PC-9 (cell line): ENCODE measurements at regions of chr1 and their contacts with region 1.

Region 1: DNA sequence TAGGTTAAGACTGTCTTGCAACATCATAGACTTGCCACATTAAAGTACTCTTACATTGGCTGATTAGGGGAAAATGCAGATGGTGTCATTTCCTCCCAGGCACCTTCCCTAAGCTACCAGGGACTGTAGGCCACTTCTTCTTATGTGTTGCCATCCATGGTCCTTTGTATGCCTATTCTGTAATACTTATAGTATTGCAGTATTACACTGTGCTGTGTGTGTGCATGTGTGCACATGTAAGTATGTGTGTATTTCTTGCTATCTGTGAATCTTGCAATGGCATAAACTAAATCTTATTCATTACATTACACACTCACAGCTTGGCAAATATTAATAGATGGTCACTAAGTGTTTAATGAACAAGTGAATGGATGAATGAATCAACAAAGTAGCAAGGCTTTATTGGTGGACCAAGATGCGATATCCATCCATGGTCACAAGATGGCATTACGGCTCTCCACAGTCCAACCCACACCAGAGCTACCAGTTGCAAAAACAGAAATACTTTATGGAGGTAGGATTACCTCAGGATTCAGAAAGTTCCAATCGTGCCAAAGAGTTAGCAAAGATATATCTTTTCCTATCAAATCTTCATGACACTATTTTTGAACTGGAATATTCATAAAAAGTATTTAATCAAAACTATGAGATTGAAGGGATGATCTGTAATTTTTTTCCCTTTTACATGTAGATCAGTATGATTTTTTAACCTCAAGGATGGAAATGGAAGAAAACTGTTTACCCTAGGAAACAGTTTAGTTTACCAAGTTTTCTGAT is 160.2 kb downstream of the DENND1B start:
- DNase-seq: peak in 1 of 2 experiments; percentile 17
- H3K4me3 ChIP-seq: no peak overlapping the region
- H3K27ac ChIP-seq: no peak overlapping the region
- H3K4me1 ChIP-seq: no peaks in the 10 kb centered on the region
- H3K27me3 ChIP-seq: no peaks in the 10 kb centered on the region
- CTCF ChIP-seq: peak; percentile 67

Region 2: DNA sequence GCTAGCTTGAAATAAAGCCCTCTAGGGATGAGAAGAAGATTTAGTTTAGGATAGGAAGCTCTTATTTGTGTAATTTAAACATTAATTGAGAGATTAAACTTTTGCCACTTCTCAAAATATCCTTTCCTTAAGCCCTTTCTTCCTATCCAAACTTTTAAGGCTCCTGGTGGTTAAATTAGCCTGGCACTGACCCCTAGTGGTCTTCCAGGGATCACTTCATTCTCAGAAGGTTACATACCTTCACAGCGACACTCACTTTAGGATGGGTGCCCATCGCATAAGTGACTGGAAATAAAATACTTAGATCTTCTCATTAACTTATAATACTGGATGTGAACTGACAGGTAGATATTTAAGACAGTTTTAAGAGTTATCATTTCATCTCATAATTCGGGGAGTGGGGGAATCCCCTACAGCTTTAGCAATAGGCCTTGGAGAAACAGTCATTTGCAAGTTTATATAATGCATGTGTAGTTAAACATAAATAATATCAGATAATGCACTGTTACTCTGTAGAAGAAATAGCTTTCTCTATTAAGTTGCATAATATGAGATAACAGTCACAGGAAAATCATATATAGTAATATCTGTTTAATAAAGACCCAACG is 309.5 kb after region 1 on chr1:
- CTCF ChIA-PET with region 1: interaction called, 3 read pairs
- POLR2A ChIA-PET with region 1: no interaction called
- intact Hi-C with region 1: loop called (anchors 1 kb)
- DNase-seq: peak in 1 of 2 experiments; percentile 18
- H3K4me3 ChIP-seq: no peak overlapping the region
- H3K27ac ChIP-seq: no peak overlapping the region
- H3K4me1 ChIP-seq: no peaks in the 10 kb centered on the region
- H3K27me3 ChIP-seq: no peaks in the 10 kb centered on the region
- CTCF ChIP-seq: peak; percentile 84

Region 3: GRCh38 chr1:198088360-198089071 is 473.4 kb after region 1 on chr1:
- CTCF ChIA-PET with region 1: no interaction called
- POLR2A ChIA-PET with region 1: no interaction called
- intact Hi-C with region 1: loop called (anchors 1 kb)
- DNase-seq: peak in 1 of 2 experiments; percentile 16
- H3K4me3 ChIP-seq: no peak overlapping the region
- H3K27ac ChIP-seq: no peak overlapping the region
- H3K4me1 ChIP-seq: no peaks in the 10 kb centered on the region
- H3K27me3 ChIP-seq: no peaks in the 10 kb centered on the region
- CTCF ChIP-seq: peak; percentile 75

Region 4: DNA sequence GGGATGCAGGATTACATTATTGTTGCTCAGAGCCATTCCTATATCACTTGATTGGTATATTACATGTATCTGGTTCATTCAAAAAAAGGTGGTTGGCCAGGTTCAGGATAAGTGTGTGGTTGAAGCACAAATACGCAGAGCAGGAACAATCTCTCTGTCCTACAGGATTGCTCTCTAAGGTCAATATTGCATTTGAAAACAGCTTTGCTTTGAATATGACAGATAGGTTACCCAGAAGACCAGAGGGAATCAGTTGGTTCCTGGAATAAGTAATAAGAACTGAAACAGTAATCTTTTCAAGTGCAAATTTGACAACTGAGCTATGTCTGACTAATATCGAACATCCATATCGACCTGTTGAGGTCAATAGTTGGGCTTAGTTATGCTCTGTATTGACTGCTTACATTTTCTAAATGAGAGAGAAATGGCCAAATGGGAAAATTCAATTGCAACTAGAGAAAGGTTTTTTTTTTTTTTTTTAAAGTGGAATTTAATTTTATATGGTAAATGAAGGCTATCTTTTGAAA is 748.6 kb after region 1 on chr1:
- CTCF ChIA-PET with region 1: no interaction called
- POLR2A ChIA-PET with region 1: no interaction called
- intact Hi-C with region 1: loop called (anchors 10 kb)
- DNase-seq: no peak
- H3K4me3 ChIP-seq: no peak overlapping the region
- H3K27ac ChIP-seq: no peak overlapping the region
- H3K4me1 ChIP-seq: no peaks in the 10 kb centered on the region
- H3K27me3 ChIP-seq: no peaks in the 10 kb centered on the region
- CTCF ChIP-seq: no peak

Region 5: GRCh38 chr1:198657550-198658064 is 1042.5 kb after region 1 on chr1:
- CTCF ChIA-PET with region 1: no interaction called
- POLR2A ChIA-PET with region 1: no interaction called
- intact Hi-C with region 1: no loop called
- DNase-seq: peak; percentile 45 to 93
- H3K4me3 ChIP-seq: no peak overlapping the region
- H3K27ac ChIP-seq: peak overlapping the region; percentile 70
- H3K4me1 ChIP-seq: peaks cover 28% of the 10 kb centered on the region
- H3K27me3 ChIP-seq: no peaks in the 10 kb centered on the region
- CTCF ChIP-seq: no peak